Posterior cingulate gyrus (tissue), 11 donors: ENCODE measurements at regions of chr17 and their contacts with region 1.

Region 1: GRCh38 chr17:8186787-8187516 is 3.0 kb downstream of the BORCS6 start:
- DNase-seq: peak; percentile 86 to 99 (median 91)

Region 2: DNA sequence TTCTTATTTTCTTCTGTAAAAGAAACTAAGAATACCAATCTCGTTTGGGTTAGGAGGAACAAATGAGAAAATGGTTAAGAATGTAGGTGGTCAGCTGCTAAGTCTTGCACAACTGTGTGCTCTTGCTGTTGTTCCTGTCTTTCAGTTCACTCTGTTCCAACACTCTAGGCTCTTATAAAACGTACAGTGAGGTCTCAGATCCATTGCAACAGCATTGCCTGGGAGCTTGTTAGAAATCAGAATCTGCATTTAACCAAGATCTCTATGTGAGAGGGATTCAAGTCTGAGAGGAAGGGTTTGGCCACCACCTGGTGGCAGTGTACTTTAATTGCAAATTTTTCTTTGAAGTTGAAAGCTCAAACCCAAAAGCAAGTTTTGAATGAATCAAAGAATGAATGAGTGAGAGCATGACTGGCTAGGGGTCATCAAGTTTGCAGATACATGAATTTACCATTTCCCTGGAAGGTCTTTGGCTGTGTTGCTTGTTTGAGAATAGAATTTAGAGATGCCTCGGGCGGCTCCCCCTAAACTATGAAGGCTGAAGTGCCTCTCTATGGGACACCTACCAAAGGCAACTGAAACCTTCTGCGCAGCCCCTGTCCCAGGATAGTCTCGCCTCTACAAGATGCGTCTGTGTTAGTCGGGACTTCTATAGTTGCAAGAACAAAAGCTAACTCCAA is 145.6 kb before region 1 on chr17:
- intact Hi-C with region 1: no loop called
- DNase-seq: peak in 2 of 10 donors; percentile 26 to 43

Region 3: GRCh38 chr17:8209909-8210760 is 23.2 kb after region 1 on chr17 and contains the start of gene AURKB:
- intact Hi-C with region 1: no loop called
- DNase-seq: peak; percentile 82 to 99 (median 94)

Region 4: DNA sequence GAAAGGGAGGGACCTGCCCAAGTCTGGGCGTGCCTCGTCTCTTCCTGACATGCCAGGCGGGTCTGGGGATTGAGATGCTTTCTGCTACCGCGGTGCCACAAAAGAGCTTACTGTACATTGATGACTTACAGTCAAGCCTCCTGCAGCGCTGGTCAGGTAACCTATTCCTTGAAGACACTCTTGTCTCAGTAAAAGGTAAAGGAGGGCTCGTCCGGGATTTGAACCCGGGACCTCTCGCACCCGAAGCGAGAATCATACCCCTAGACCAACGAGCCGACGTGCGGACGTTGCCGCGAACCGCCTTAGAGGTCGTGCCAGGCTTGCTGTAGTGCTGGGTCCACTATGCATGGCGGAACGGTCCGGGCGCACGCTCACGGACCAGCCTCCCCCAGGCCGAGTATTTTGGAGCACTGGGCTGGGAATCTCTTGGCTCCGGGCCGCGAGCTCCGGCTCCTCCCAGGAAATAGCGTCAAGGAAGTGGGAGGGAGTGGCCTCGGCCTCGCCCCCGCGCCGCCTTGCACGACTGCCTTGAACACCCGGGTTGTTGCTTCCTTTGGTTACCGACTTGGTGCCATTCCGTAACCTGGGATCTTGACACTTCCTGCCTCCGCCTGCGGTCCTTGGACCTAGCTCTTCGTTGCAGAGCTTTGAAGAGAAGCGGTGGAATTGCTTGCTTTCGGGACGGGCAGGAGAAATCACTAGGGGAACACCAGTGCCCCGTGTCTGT is 35.8 kb after region 1 on chr17:
- intact Hi-C with region 1: loop called (anchors 1 kb)
- DNase-seq: peak; percentile 88 to 99 (median 93)